IMR-90 (cell line): ENCODE measurements at regions of chr9 and their contacts with region 1.

Region 1: DNA sequence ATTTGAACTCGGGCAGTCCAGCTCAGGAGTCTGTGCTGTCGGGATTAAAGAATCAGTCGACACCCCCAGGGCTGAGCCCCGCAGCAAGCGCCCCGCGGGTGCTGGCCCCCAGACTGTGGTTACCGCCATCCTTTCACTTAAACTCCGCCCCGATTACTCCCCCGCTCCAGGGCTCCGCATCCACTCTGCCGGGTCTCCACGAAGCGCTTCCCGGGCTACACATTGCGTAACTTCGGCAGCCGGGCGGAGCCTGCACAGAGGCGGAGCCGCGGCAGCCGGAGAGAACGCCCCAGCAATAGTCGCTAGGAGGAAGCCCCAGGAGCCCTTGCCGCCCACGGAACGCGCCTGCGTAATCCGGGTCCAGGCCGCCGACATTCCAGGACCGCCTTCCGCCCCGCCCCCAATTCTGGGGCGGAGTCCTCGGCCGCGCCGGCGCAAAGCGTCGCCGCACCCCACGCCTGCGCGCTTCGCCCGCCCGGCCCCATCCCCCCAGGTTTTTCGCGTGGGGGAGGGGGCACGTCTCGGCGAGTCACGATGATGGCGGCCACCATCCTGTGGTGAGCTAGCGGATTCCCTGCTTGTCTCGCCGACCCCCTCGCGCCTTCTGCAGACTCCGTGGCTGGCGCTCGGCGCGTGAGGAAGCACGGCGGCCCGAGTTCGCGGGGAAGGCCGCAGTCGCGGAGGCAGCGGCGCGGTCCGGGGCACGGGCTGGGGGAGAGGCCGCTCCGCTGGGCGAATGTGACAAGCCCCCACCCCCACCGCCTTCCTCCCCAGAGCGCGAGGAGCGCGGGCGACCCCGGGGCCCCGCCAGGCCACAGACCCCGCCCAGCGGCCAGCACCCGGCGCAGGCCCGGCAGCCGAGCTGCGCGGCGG is at the start of gene RAD23B:
- DNase-seq: peak; percentile 98
- ATAC-seq: peak; percentile 89
- H3K4me3 ChIP-seq: peak within 1 kb of the TSS; percentile 79
- H3K27ac ChIP-seq: peak within 1 kb of the TSS; percentile 96
- H3K4me1 ChIP-seq: no peaks in the 10 kb centered on the region
- H3K27me3 ChIP-seq: no peaks in the 10 kb centered on the region
- CTCF ChIP-seq: no peak
- POLR2A ChIP-seq: peak; percentile 93
- RAD21 ChIP-seq: no peak
- total RNA-seq, gene RAD23B: 126 and 127 TPM in 2 replicates

Region 2: DNA sequence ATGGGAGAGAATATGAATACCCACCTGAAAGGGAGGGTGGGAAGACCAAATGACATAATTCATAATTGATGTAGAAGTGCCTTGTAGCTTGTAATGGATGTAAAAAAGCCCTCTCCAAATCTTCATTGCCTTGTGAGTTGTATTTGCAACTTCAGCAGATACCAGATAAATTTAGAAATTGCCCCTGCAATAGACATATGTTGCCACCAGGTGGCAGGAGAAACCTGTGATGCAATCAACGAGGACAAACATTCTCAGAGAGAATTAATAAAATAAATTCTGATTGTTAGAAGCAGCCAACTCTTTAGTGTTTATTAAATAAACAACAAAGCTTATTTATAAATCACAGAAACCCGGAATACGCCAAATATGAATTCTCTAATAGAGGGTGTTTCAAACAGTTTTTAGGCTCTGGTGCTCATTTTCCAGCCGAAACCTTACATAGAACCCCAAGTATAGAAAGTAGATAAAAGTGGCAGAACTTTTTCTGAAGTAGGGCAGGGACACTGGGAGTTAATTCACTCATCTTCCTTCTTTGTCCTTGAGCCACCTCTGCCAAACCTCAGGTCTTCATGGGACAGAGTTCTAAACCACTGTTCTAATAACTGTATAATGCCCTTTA is 1440.9 kb before region 1 on chr9:
- CTCF ChIA-PET with region 1: no interaction called
- POLR2A ChIA-PET with region 1: no interaction called
- dilution Hi-C with region 1: no loop called
- in situ Hi-C with region 1: no loop called
- intact Hi-C with region 1: loop called (anchors 10 kb)
- DNase-seq: peak; percentile 47
- ATAC-seq: peak; percentile 73; the same call in 1 of the 2 replicates
- H3K4me3 ChIP-seq: no peak overlapping the region
- H3K27ac ChIP-seq: no peak overlapping the region
- H3K4me1 ChIP-seq: no peaks in the 10 kb centered on the region
- H3K27me3 ChIP-seq: no peaks in the 10 kb centered on the region
- CTCF ChIP-seq: peak; percentile 92
- POLR2A ChIP-seq: no peak
- RAD21 ChIP-seq: peak; percentile 73

Region 3: DNA sequence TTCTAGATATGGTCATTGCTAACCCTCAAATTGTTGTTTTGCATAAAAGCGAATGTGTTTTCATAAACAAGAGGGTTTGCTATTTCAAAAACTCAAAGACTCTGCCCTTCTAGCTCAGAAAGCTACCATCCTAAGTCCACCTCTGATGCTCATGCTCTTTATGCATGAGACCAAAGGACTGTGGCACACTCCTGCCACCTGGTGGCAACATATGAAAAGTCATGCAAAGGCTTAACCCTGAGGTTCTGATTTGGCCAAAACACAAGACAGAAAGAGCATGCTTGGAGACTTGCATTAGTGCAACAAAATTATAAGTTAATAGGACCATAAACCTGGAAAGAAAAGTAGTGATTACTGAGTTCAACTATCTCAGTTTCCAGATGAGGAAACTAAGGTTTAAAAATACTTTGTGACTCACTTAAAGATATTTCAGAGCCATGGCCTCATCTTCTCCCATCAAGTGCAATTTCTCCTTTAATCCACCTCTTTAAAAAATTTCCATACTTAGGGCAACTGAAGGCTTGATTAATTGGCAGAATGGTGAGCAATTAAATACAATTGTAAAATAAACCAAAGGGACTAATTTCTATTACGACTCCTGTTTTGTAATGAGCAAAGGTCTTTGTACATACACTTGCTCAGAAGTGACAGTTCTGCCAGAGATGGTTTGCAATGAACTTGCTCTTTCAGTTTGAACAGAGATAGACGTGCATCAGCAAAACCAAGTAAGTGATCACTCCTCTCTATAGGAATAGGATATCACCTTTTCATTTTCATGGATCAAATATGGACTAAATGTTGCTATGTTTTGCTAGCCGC is 110.6 kb before region 1 on chr9:
- CTCF ChIA-PET with region 1: no interaction called
- POLR2A ChIA-PET with region 1: no interaction called
- dilution Hi-C with region 1: no loop called
- in situ Hi-C with region 1: no loop called
- intact Hi-C with region 1: loop called (anchors 5 kb)
- DNase-seq: peak; percentile 78
- ATAC-seq: peak; percentile 93
- H3K4me3 ChIP-seq: no peak overlapping the region
- H3K27ac ChIP-seq: no peak overlapping the region
- H3K4me1 ChIP-seq: peaks cover 2% of the 10 kb centered on the region; the same call in 1 of the 2 replicates
- H3K27me3 ChIP-seq: peaks cover 2% of the 10 kb centered on the region; the same call in 1 of the 2 replicates
- CTCF ChIP-seq: peak; percentile 85
- POLR2A ChIP-seq: no peak
- RAD21 ChIP-seq: peak; percentile 92

Region 4: DNA sequence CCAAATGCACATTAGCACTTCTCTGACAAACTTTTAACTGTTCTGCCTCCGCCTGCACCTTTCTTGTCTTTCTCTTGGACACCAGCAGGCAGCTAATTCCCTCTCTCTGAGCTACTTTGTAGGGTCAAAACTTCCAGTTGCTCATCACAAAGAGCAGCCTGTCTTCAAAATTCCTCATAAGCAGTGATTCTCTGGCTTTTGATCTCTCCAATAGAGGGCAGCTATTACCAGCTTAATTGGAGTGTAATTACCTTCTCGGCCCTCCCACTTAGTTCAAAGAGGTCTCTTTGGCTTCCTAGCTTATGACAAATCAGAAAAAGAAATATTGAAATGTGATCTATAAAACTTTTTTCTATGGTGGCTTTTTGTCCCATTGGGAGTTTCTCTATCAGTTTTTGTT is 43.5 kb before region 1 on chr9:
- CTCF ChIA-PET with region 1: interaction called, 3 read pairs
- POLR2A ChIA-PET with region 1: interaction called, 3 read pairs
- dilution Hi-C with region 1: no loop called
- in situ Hi-C with region 1: no loop called
- intact Hi-C with region 1: loop called (anchors 1 kb)
- DNase-seq: peak; percentile 48
- ATAC-seq: peak; percentile 48
- H3K4me3 ChIP-seq: no peak overlapping the region
- H3K27ac ChIP-seq: no peak overlapping the region
- H3K4me1 ChIP-seq: peaks cover 6% of the 10 kb centered on the region
- H3K27me3 ChIP-seq: peaks cover 1% of the 10 kb centered on the region; the same call in 1 of the 2 replicates
- CTCF ChIP-seq: peak; percentile 49; the same call in 1 of the 2 replicates
- POLR2A ChIP-seq: no peak
- RAD21 ChIP-seq: peak; percentile 47

Region 5: GRCh38 chr9:107340920-107341632 is 58.1 kb after region 1 on chr9:
- CTCF ChIA-PET with region 1: no interaction called
- POLR2A ChIA-PET with region 1: no interaction called
- dilution Hi-C with region 1: no loop called
- in situ Hi-C with region 1: no loop called
- intact Hi-C with region 1: loop called (anchors 2 kb)
- DNase-seq: peak; percentile 60
- ATAC-seq: peak; percentile 50; the same call in 1 of the 2 replicates
- H3K4me3 ChIP-seq: no peak overlapping the region
- H3K27ac ChIP-seq: no peak overlapping the region
- H3K4me1 ChIP-seq: peaks cover 3% of the 10 kb centered on the region; the same call in 1 of the 2 replicates
- H3K27me3 ChIP-seq: no peaks in the 10 kb centered on the region
- CTCF ChIP-seq: peak; percentile 79
- POLR2A ChIP-seq: no peak
- RAD21 ChIP-seq: peak; percentile 68